ENCODE measurements at regions of chr12 and their contacts with region 1.

Region 1: GRCh38 chr12:122190842-122191668 is 8.1 kb downstream of the LRRC43 start:
- DNase-seq: peak; percentile 9
- ATAC-seq: peak; percentile 98
- H3K4me3 ChIP-seq: no peak overlapping the region
- H3K27ac ChIP-seq: no peak overlapping the region
- H3K4me1 ChIP-seq: no peaks in the 10 kb centered on the region
- H3K27me3 ChIP-seq: no peaks in the 10 kb centered on the region; a peak in 1 of 4 replicates
- CTCF ChIP-seq: peak; percentile 89 to 93 (median 90)
- EP300 ChIP-seq: no peak
- POLR2A ChIP-seq: no peak
- RAD21 ChIP-seq: peak; percentile 98

Region 2: GRCh38 chr12:122051231-122051876 is 139.7 kb before region 1 on chr12:
- CTCF ChIA-PET with region 1: interaction called, 9 read pairs
- POLR2A ChIA-PET with region 1: no interaction called
- RAD21 ChIA-PET with region 1: no interaction called
- SMC1A ChIA-PET with region 1: interaction called, 4 read pairs
- in situ Hi-C with region 1: loop called (anchors 5 kb)
- intact Hi-C with region 1: loop called (anchors 1 kb)
- DNase-seq: no peak
- ATAC-seq: no peak
- H3K4me3 ChIP-seq: no peak overlapping the region
- H3K27ac ChIP-seq: no peak overlapping the region
- H3K4me1 ChIP-seq: no peaks in the 10 kb centered on the region
- H3K27me3 ChIP-seq: no peaks in the 10 kb centered on the region
- CTCF ChIP-seq: no peak
- EP300 ChIP-seq: no peak
- POLR2A ChIP-seq: no peak
- RAD21 ChIP-seq: no peak

Region 3: GRCh38 chr12:122130150-122130549 is 60.9 kb before region 1 on chr12:
- CTCF ChIA-PET with region 1: interaction called, 29 read pairs
- POLR2A ChIA-PET with region 1: no interaction called
- RAD21 ChIA-PET with region 1: interaction called, 3 read pairs
- SMC1A ChIA-PET with region 1: interaction called, 6 read pairs
- in situ Hi-C with region 1: no loop called
- intact Hi-C with region 1: loop called (anchors 1 kb)
- DNase-seq: no peak
- ATAC-seq: no peak
- H3K4me3 ChIP-seq: no peak overlapping the region
- H3K27ac ChIP-seq: no peak overlapping the region
- H3K4me1 ChIP-seq: no peaks in the 10 kb centered on the region
- H3K27me3 ChIP-seq: no peaks in the 10 kb centered on the region
- CTCF ChIP-seq: no peak
- EP300 ChIP-seq: no peak
- POLR2A ChIP-seq: no peak
- RAD21 ChIP-seq: no peak

Measured in GM12878 (cell line).